ENCODE measurements at regions of chr10 and their contacts with region 1.

Region 1: DNA sequence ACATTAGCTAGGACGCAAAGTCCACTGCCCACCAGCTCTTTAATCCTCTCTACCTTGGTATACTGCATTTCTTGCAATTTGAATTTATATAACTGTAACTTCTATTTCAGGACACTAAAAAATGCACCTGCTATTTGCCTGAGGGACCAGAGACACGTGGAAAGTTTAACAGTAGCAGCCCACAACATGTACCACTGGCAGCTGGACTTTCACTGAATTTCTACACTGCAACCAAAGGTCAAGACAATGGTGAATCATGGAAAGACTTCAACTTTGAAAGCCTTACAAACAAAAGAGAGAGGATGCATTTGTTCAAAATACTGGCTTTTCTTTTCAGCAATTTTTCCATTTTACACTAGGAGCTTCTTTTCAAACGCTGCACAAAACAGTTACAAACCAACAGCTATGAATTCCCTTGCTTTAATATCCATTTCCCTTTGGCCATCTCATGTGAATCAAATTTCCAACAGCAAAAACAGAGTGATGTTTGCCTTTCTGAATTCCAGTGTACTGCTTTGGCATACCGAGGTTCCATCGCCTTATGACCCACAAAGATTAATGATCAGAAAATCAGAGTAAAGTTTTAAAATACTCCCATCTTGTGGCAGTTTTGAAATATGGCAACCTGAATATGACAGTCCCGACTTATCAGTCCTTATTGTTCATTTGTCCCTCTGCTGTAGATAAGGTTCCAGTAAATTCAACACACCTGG is 29.9 kb upstream of the HNRNPH3 start:
- DNase-seq: no peak
- H3K4me3 ChIP-seq: no peak overlapping the region
- H3K27ac ChIP-seq: no peak overlapping the region
- H3K4me1 ChIP-seq: peaks cover 0 to 3% (median 0%) of the 10 kb centered on the region in 4 experiments; a peak in 1 of 7 replicates
- H3K27me3 ChIP-seq: no peaks in the 10 kb centered on the region
- CTCF ChIP-seq: peak in 2 of 3 experiments; percentile 37 to 48; a peak in 2 of 4 replicates
- EP300 ChIP-seq: no peak
- POLR2A ChIP-seq: no peak
- RAD21 ChIP-seq: peak; percentile 64 to 67

Region 2: DNA sequence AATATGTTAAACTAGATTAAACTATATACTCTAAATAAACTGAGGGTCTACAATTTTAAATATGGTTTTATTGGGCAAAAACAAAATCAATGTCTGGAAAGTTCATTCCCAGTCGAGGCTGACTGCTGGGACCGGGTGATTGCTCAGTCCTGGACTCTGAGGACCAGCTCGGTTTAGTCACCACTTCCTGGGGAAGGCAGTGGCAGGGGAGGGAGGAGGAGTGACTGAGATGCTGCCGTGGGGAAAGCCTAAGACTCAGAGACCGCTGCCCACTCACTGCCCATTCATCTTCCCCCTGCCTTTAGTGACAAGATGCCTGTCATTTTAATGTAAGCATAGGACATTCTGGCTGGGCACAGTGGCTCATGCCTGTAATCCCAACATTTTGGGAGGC is 99.0 kb before region 1 on chr10:
- CTCF ChIA-PET with region 1: interaction called, 10 read pairs
- POLR2A ChIA-PET with region 1: no interaction called
- DNase-seq: no peak
- H3K4me3 ChIP-seq: no peak overlapping the region
- H3K27ac ChIP-seq: no peak overlapping the region
- H3K4me1 ChIP-seq: no peaks in the 10 kb centered on the region
- H3K27me3 ChIP-seq: no peaks in the 10 kb centered on the region
- CTCF ChIP-seq: no peak
- EP300 ChIP-seq: no peak
- POLR2A ChIP-seq: no peak
- RAD21 ChIP-seq: no peak

Region 3: GRCh38 chr10:68231106-68231816 is 70.7 kb before region 1 on chr10:
- CTCF ChIA-PET with region 1: interaction called, 16 read pairs
- POLR2A ChIA-PET with region 1: no interaction called
- DNase-seq: peak; percentile 38 to 88
- H3K4me3 ChIP-seq: peak overlapping the region; percentile 54 to 74 (median 68)
- H3K27ac ChIP-seq: no peak overlapping the region; the same call in 1 of the 2 replicates
- H3K4me1 ChIP-seq: peaks cover 0 to 5% (median 0%) of the 10 kb centered on the region in 4 experiments; a peak in 3 of 7 replicates
- H3K27me3 ChIP-seq: peaks cover 0 to 5% (median 3%) of the 10 kb centered on the region in 4 experiments; a peak in 4 of 7 replicates
- CTCF ChIP-seq: peak; percentile 33 to 46 (median 46)
- EP300 ChIP-seq: no peak
- POLR2A ChIP-seq: peak; percentile 29 to 74
- RAD21 ChIP-seq: peak in 1 of 2 experiments; percentile 8; a peak in 1 of 4 replicates

Region 4: GRCh38 chr10:68284062-68285001 is 17.6 kb before region 1 on chr10:
- CTCF ChIA-PET with region 1: interaction called, 15 read pairs
- POLR2A ChIA-PET with region 1: no interaction called
- DNase-seq: no peak
- H3K4me3 ChIP-seq: no peak overlapping the region
- H3K27ac ChIP-seq: no peak overlapping the region
- H3K4me1 ChIP-seq: no peaks in the 10 kb centered on the region
- H3K27me3 ChIP-seq: no peaks in the 10 kb centered on the region
- CTCF ChIP-seq: no peak
- EP300 ChIP-seq: no peak
- POLR2A ChIP-seq: no peak
- RAD21 ChIP-seq: no peak

Region 5: DNA sequence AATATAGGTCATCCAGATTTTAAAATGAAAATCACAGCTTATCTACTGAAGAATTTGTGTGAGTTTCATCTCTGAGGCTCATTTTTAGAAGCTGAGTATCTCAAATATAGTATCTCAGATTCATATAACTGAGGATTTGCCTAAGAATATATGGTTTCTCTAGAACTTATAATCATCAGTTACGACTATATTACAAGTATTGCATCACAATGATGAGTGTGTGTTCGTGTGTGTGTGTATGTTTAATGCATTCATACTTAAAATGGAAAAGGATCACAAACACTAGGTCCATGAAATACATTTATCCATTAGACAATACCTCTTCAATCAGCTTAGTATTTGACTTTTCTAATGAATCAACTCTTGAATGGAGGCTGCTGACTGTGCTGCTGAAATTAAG is 83.8 kb after region 1 on chr10:
- CTCF ChIA-PET with region 1: no interaction called
- POLR2A ChIA-PET with region 1: no interaction called
- DNase-seq: no peak
- H3K4me3 ChIP-seq: no peak overlapping the region
- H3K27ac ChIP-seq: no peak overlapping the region
- H3K4me1 ChIP-seq: no peaks in the 10 kb centered on the region
- H3K27me3 ChIP-seq: no peaks in the 10 kb centered on the region
- CTCF ChIP-seq: no peak
- EP300 ChIP-seq: no peak
- POLR2A ChIP-seq: no peak
- RAD21 ChIP-seq: no peak